AG04449 (cell line): ENCODE measurements at regions of chr12 and their contacts with region 1.

Region 1: GRCh38 chr12:31647086-31647491 is 12.4 kb upstream of the ETFBKMT start:
- DNase-seq: no peak
- H3K4me3 ChIP-seq: no peak overlapping the region
- CTCF ChIP-seq: no peak

Region 2: GRCh38 chr12:31603546-31604009 is 43.5 kb before region 1 on chr12:
- CTCF ChIA-PET with region 1: no interaction called
- POLR2A ChIA-PET with region 1: no interaction called
- DNase-seq: no peak
- H3K4me3 ChIP-seq: no peak overlapping the region
- CTCF ChIP-seq: no peak

Region 3: DNA sequence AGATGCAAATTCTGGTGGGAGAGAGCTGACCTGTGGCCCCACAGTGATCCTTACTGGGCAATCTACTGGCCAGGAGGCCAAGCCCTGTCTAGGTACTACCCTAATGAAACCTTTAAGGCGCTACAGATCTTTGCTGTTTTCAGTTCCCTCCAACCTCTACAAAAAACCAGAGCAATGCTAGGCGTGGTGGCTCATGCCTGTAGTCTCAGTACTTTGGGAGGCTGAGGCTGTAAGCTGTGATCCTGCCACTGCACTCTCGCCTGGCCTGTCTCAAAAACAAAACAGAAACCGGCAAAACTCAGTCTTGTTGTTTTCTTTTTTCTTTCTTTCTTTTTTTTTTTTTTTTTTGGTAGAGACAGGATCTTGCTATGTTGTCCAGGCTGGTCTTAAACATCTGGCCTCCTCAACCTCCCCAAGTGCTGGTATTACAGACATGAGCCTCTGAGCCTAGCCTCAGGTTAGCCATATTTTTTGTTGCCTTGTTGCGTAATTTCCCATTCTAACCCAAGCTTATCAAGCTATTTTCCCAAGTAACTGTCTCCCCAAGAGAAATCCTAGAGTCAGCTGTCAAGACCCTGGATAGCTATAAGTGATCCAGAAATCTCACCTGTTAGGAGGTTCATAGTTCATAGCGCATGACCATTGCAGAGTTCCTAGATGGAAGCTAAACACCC is 15.2 kb after region 1 on chr12:
- CTCF ChIA-PET with region 1: interaction called, 10 read pairs
- POLR2A ChIA-PET with region 1: no interaction called
- DNase-seq: no peak
- H3K4me3 ChIP-seq: no peak overlapping the region
- CTCF ChIP-seq: no peak

Region 4: GRCh38 chr12:32302218-32303173 is 655.4 kb after region 1 on chr12:
- CTCF ChIA-PET with region 1: interaction called, 27 read pairs
- POLR2A ChIA-PET with region 1: no interaction called
- DNase-seq: no peak
- H3K4me3 ChIP-seq: no peak overlapping the region
- CTCF ChIP-seq: peak; percentile 54